GM23248 (cell line): ENCODE measurements at regions of chr3 and their contacts with region 1.

Region 1: GRCh38 chr3:48157950-48158376 is 30.3 kb downstream of the CDC25A start:
- DNase-seq: peak; percentile 75
- H3K4me3 ChIP-seq: no peak overlapping the region
- H3K27ac ChIP-seq: no peak overlapping the region
- H3K4me1 ChIP-seq: peaks cover 15% of the 10 kb centered on the region; the same call in 1 of the 2 replicates
- H3K27me3 ChIP-seq: no peaks in the 10 kb centered on the region

Region 2: DNA sequence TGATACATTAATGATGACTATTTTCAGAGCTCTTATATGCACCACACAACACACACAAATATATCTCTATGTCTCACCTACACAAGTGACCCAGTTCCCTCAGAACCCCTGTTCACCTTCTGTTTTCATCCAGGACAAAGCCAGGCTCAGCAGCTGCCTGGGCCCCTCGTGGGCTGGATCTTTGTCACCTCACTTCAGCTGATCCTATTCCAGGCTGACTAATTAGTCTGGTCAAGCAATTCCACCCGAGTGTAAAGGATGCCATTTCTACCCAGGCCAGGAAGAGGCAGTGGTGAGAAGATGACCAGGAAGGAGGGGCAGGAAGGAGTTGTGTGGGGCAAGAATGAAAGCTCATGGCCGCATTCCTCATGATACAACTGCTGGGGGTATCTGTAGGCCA is 292.8 kb before region 1 on chr3:
- in situ Hi-C with region 1: loop called (anchors 10 kb)
- DNase-seq: peak; percentile 35
- H3K4me3 ChIP-seq: no peak overlapping the region
- H3K27ac ChIP-seq: no peak overlapping the region
- H3K4me1 ChIP-seq: no peaks in the 10 kb centered on the region
- H3K27me3 ChIP-seq: no peaks in the 10 kb centered on the region

Region 3: GRCh38 chr3:49171119-49171774 is 1013.3 kb after region 1 on chr3 and contains the start of gene KLHDC8B:
- in situ Hi-C with region 1: no loop called
- DNase-seq: peak; percentile 86
- H3K4me3 ChIP-seq: peak within 1 kb of the TSS; percentile 89
- H3K27ac ChIP-seq: peak within 1 kb of the TSS; percentile 40
- H3K4me1 ChIP-seq: peaks cover 18% of the 10 kb centered on the region
- H3K27me3 ChIP-seq: no peaks in the 10 kb centered on the region
- total RNA-seq, gene KLHDC8B: 19.5 and 22.5 TPM in 2 replicates